Activated naive CD4-positive, alpha-beta T cell treated with anti-CD3 and anti-CD28 coated beads for 36 hours (primary cell): ENCODE measurements at regions of chr7 and their contacts with region 1.

Region 1: DNA sequence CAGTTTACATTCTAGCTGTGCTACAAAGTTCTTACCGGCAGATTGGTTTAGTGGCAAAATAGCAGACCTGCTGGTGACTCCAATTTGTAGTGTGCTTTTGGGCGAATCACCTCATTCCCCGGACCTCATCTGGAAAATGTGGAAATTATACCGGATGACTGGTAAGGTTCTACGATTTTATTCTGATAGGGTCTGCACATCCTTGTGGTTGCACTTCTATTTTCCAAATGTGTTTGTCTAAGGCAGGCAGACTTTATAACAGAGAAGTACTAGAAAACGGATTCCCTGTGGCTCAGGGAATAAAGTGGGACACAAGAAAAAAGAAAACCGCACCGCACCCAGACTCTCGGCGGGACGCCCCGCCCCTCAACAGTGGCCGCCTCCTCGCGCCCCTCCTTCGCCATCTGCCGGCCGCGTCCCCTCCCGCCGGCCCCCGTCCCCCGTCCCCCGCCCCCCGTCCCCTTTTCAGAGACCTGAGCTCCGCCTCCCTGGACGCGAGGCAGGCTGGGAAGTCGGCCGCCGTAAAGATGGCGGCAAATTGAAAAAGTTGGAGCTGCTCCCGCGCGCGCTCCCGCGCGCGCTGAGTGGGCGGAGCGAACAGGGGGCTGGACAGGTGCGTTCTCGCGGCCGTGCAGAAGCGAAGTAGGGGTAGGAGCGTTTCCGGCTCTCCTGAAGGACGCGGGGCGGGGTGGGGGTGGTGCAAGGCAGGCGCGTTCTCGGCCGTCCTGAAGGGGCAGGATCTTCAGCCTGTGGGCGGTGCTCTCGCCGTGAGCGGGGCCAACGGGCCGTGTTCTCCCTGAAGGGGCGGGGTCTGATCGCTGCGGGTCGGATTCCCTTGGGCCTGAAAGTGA is 531 bp upstream of the CCM2 start:
- DNase-seq: peak; percentile 100
- H3K4me3 Mint-ChIP-seq: peak overlapping the region; percentile 88
- H3K27ac Mint-ChIP-seq: peak overlapping the region; percentile 94
- H3K4me1 Mint-ChIP-seq: peaks cover 56% of the 10 kb centered on the region
- H3K27me3 Mint-ChIP-seq: no peaks in the 10 kb centered on the region

Region 2: DNA sequence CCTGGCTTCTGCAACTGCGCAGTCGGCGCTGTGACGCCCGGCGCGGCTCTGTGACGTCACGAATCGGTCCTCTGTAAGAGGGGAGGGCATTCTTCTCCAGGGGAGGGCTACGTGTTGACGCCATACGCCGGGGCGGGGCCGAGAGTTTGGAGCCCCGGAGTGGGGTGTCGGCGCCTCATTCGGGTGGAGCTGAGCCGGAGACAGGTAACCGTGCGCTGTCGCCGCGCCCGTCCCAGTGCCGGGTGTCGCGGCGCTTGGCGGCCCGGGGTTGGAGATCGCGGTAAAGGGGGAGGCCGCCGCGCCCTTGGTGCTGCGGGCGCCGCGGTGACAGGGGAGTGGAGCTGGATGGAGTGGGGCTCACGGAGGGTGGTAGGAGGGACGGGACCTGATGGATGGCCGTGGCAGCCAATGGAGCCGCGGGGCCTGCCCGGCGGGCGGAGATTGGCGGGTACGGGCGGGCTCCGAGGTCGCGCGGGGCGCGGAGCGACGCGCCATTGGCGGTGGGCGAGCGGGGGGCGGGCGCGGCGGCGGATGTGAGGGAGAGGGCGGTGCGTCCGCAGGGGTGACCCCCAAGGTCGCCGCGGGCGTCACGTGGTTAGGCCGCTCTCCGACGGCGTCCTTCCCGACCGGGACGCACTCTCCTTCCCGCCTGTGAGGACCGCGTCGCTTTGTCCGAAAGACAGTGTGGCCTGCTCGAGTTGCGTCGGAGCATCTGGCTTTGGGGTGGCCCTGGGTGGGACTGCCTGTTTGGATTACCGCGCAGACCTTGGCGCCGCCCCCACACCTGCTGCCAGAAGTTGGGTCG is 392.8 kb before region 1 on chr7 and contains the start of gene OGDH:
- CTCF ChIA-PET with region 1: no interaction called
- intact Hi-C with region 1: loop called (anchors 1 kb)
- DNase-seq: peak; percentile 100
- H3K4me3 Mint-ChIP-seq: peak within 1 kb of the TSS; percentile 96
- H3K27ac Mint-ChIP-seq: peak within 1 kb of the TSS; percentile 97
- H3K4me1 Mint-ChIP-seq: peaks cover 31% of the 10 kb centered on the region
- H3K27me3 Mint-ChIP-seq: no peaks in the 10 kb centered on the region
- total RNA-seq, gene OGDH: 73.9 to 78.4 TPM

Region 3: DNA sequence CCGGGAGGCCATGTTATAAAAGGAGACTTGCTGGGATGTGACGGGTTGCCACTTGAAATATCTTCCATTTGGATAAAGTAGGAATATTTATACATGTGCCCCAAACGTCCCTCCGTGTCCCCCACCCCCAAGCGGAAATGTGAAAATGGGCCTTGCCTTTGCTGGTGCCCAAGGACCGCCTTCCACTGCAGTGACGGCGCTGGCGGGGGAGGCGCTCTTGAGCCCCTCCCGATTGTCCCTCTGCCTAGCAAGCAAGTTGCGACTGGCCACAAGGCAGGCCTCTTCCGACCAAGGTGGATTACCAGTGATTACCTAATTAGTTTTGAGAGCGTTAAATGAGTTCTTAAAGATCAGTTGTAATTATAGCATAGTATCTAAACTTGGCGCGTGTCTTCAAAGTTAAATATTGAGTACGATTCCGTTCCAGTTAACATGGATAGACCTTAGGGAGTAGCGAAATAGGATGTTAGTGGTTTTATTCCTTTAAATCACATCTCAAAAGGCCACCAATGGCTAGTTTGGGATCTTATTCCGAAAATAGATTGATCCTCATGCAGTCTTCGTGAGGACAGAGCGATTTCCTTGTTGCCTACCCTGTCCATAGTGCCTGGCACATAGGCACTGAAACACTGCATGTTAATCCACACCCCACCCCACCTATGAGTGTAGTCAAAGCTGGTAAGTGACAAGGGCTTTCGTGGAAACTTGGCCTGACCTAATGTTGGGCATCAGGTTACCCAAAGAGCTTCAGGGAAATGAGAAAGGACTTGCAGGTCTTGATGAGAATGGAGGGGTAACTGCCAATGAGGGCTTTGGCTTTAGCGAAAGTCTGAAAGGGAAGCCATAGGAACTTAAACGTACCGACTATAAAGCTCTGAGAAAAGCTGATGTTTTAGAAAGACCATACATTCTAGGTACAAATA is 201.9 kb before region 1 on chr7:
- CTCF ChIA-PET with region 1: interaction called, 3 read pairs
- intact Hi-C with region 1: loop called (anchors 1 kb)
- DNase-seq: peak; percentile 89
- H3K4me3 Mint-ChIP-seq: peak overlapping the region; percentile 98
- H3K27ac Mint-ChIP-seq: peak overlapping the region; percentile 98
- H3K4me1 Mint-ChIP-seq: peaks cover 30% of the 10 kb centered on the region
- H3K27me3 Mint-ChIP-seq: no peaks in the 10 kb centered on the region

Region 4: GRCh38 chr7:44914992-44915607 is 84.4 kb before region 1 on chr7:
- CTCF ChIA-PET with region 1: no interaction called
- intact Hi-C with region 1: loop called (anchors 1 kb)
- DNase-seq: peak; percentile 88
- H3K4me3 Mint-ChIP-seq: no peak overlapping the region
- H3K27ac Mint-ChIP-seq: peak overlapping the region; percentile 83
- H3K4me1 Mint-ChIP-seq: peaks cover 17% of the 10 kb centered on the region
- H3K27me3 Mint-ChIP-seq: no peaks in the 10 kb centered on the region

Region 5: GRCh38 chr7:44986218-44987053 is 13.0 kb before region 1 on chr7:
- CTCF ChIA-PET with region 1: interaction called, 5 read pairs
- intact Hi-C with region 1: loop called (anchors 1 kb)
- DNase-seq: peak; percentile 96
- H3K4me3 Mint-ChIP-seq: peak overlapping the region; percentile 99
- H3K27ac Mint-ChIP-seq: peak overlapping the region; percentile 99
- H3K4me1 Mint-ChIP-seq: peaks cover 43% of the 10 kb centered on the region
- H3K27me3 Mint-ChIP-seq: no peaks in the 10 kb centered on the region

Region 6: GRCh38 chr7:45111298-45112223 is 112.1 kb after region 1 on chr7 and contains the start of gene TBRG4:
- CTCF ChIA-PET with region 1: no interaction called
- intact Hi-C with region 1: loop called (anchors 1 kb)
- DNase-seq: peak; percentile 96
- H3K4me3 Mint-ChIP-seq: peak within 1 kb of the TSS; percentile 85
- H3K27ac Mint-ChIP-seq: peak within 1 kb of the TSS; percentile 89
- H3K4me1 Mint-ChIP-seq: peaks cover 40% of the 10 kb centered on the region
- H3K27me3 Mint-ChIP-seq: no peaks in the 10 kb centered on the region
- total RNA-seq, gene TBRG4: 127 to 136 TPM

Region 7: DNA sequence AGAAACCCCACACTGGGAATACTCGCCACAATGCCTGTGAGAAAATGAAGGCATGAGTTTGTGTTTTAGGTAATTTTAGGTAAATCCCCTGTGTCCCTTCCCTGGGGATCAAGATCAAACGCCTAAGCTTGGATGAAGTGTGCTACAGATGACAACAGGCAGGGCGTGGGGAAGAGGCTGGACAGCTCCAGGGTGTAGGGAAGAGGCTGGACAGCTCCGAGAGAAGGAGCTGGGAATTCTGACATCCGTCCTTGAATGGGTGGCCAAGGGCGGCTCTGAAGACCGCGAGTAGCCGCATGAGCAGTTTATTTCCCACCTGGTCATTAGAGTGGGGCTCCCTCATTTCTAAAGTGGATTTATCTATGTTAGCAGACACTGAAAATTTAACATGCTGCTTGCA is 267.8 kb after region 1 on chr7:
- CTCF ChIA-PET with region 1: no interaction called
- intact Hi-C with region 1: no loop called
- DNase-seq: no peak
- H3K4me3 Mint-ChIP-seq: no peak overlapping the region
- H3K27ac Mint-ChIP-seq: no peak overlapping the region
- H3K4me1 Mint-ChIP-seq: no peaks in the 10 kb centered on the region
- H3K27me3 Mint-ChIP-seq: peaks cover 6% of the 10 kb centered on the region